ENCODE measurements at regions of chr7 and their contacts with region 1.

Region 1: GRCh38 chr7:149811221-149811620 is 27.0 kb upstream of the ZNF862 start:
- DNase-seq: no peak
- H3K4me3 ChIP-seq: no peak overlapping the region
- H3K27ac ChIP-seq: no peak overlapping the region
- H3K4me1 ChIP-seq: peaks cover 0 to 4% of the 10 kb centered on the region in 2 experiments; a peak in 1 of 4 replicates
- H3K27me3 ChIP-seq: peaks cover 8% of the 10 kb centered on the region; the same call in 1 of the 2 replicates
- CTCF ChIP-seq: peak; percentile 46
- EP300 ChIP-seq: no peak
- RAD21 ChIP-seq: no peak

Region 2: DNA sequence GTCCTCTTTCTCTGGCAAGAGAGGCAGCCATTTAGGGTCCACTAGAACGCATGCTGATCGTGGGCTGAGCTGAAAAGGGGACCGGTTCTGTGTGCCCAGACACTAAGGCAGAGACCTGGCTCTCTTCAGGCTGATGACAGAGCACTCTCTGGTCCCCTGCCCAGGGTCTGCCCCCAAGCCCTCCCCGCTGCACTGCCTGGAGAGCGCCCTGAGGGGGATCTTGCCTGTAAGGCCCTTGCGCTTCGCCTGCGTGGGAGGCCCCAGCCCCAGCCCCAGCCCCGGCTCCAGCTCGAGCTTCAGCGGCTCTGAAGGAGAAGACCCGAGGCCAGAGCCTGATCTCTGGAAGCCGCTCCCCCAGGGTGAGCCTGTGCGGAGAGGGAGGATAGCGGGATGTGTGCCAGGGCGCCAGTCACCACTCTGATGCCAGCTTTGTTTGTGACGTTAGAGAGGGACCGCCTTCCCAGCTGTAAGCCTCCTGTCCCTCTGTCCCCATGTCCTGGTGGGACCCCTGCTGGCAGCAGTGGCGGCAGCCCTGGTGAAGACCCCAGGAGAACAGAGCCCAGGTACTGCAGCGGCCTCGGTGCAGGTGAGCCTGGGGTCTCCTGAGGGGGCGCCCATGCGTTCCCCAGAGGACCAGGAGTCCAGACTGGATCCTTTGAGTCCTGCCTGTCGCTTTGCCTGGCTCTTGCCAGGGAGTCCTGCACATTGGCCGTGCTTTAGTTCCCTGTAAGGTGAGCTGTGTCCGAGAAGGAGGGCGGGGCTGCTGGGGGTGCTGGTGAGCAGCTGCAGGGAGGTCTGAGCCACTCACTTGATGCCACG is 81.0 kb before region 1 on chr7:
- CTCF ChIA-PET with region 1: no interaction called
- POLR2A ChIA-PET with region 1: no interaction called
- DNase-seq: peak; percentile 50
- H3K4me3 ChIP-seq: no peak overlapping the region
- H3K27ac ChIP-seq: no peak overlapping the region
- H3K4me1 ChIP-seq: peaks cover 0 to 2% of the 10 kb centered on the region in 2 experiments; a peak in 1 of 4 replicates
- H3K27me3 ChIP-seq: no peaks in the 10 kb centered on the region
- CTCF ChIP-seq: no peak
- EP300 ChIP-seq: no peak
- RAD21 ChIP-seq: peak; percentile 32

Region 3: GRCh38 chr7:149783386-149784250 is 27.6 kb before region 1 on chr7:
- CTCF ChIA-PET with region 1: interaction called, 189 read pairs
- POLR2A ChIA-PET with region 1: no interaction called
- DNase-seq: no peak
- H3K4me3 ChIP-seq: no peak overlapping the region
- H3K27ac ChIP-seq: no peak overlapping the region
- H3K4me1 ChIP-seq: peaks cover 0 to 35% of the 10 kb centered on the region in 2 experiments; a peak in 1 of 4 replicates
- H3K27me3 ChIP-seq: peaks cover 11% of the 10 kb centered on the region; the same call in 1 of the 2 replicates
- CTCF ChIP-seq: no peak
- EP300 ChIP-seq: no peak
- RAD21 ChIP-seq: no peak

Region 4: GRCh38 chr7:149822353-149822943 is 11.2 kb after region 1 on chr7:
- CTCF ChIA-PET with region 1: interaction called, 119 read pairs
- POLR2A ChIA-PET with region 1: no interaction called
- DNase-seq: peak; percentile 62
- H3K4me3 ChIP-seq: no peak overlapping the region
- H3K27ac ChIP-seq: no peak overlapping the region
- H3K4me1 ChIP-seq: peaks cover 0 to 3% of the 10 kb centered on the region in 2 experiments; a peak in 1 of 4 replicates
- H3K27me3 ChIP-seq: peaks cover 8% of the 10 kb centered on the region; the same call in 1 of the 2 replicates
- CTCF ChIP-seq: no peak
- EP300 ChIP-seq: no peak
- RAD21 ChIP-seq: no peak

Region 5: GRCh38 chr7:149838224-149838947 is 27.2 kb after region 1 on chr7 and contains the start of gene ZNF862:
- CTCF ChIA-PET with region 1: interaction called, 25 read pairs
- POLR2A ChIA-PET with region 1: interaction called, 10 read pairs
- DNase-seq: peak; percentile 100
- H3K4me3 ChIP-seq: peak within 1 kb of the TSS; percentile 73 to 87
- H3K27ac ChIP-seq: peak within 1 kb of the TSS; percentile 50 to 82
- H3K4me1 ChIP-seq: peaks cover 0 to 15% of the 10 kb centered on the region in 2 experiments; a peak in 2 of 4 replicates
- H3K27me3 ChIP-seq: 0 out of 2 replicates have a peak, but pooled peaks cover 18% of the 10 kb centered on the region
- CTCF ChIP-seq: no peak
- EP300 ChIP-seq: peak in 1 of 2 experiments; percentile 23; a peak in 2 of 4 replicates
- RAD21 ChIP-seq: peak; percentile 16; the same call in 1 of the 2 replicates
- polyA plus RNA-seq, gene ZNF862: 17.3 and 24.3 TPM in 2 replicates

Region 6: DNA sequence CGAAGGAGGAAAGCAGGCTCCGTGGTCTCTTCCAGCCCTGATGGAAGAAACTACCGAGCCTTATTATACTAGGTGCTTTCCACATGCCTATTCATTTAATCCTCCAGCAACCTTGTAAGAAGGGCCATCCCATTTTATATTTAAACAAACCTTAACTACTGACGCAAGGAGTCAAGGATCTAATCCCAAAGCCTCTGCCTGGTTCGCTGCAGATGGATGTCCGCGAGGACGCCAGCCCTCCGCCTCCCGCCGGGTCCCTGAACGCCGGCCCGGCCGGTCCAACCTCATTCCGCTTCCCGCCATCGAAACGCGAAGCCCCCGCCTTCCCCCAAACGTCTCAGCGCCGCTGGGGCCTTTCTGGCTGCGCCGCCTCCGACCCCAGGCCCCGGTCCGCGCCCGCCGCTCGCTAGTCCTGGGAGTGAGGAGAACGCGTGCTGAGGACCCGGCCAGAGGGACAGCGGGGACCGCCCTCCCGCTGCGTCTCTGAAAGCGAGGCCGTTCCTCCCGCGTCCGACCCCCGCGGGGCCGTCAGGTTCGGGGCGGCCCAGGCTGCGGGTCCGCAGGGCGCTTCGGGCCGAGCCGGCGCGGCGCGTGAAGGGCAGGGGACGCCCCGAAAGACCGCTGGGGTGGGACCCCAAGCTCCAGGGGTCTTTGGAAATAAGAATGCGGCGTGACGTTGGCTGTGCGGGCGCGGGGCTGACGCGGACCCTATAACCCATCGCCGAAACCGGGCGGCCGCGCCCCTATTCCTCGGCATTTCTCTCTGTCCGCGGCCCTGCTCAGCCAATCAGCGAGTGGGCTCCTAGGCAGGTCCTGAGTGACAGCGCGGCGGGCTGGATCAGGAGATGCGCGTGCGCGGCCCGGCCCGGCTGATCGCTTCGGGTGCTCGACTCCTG is 62.1 kb after region 1 on chr7 and contains the start of gene ATP6V0E2:
- CTCF ChIA-PET with region 1: interaction called, 21 read pairs
- POLR2A ChIA-PET with region 1: no interaction called
- DNase-seq: peak; percentile 100
- H3K4me3 ChIP-seq: peak within 1 kb of the TSS; percentile 88 to 91
- H3K27ac ChIP-seq: peak within 1 kb of the TSS; percentile 68 to 88
- H3K4me1 ChIP-seq: peaks cover 0 to 21% of the 10 kb centered on the region in 2 experiments; a peak in 2 of 4 replicates
- H3K27me3 ChIP-seq: no peaks in the 10 kb centered on the region
- CTCF ChIP-seq: no peak
- EP300 ChIP-seq: 0 out of 4 replicates have a peak, but pooled peaks of 1 of the 2 experiments have one; percentile 19
- RAD21 ChIP-seq: no peak
- polyA plus RNA-seq, gene ATP6V0E2: 42.6 and 49.6 TPM in 2 replicates